B cell (primary cell): ENCODE measurements at regions of chr1 and their contacts with region 1.

Region 1: GRCh38 chr1:108512239-108512981 is 47.5 kb upstream of the EEIG2 start:
- DNase-seq: peak; percentile 68
- ATAC-seq: peak; percentile 65
- H3K4me3 ChIP-seq: no peak overlapping the region
- H3K4me3 Mint-ChIP-seq: no peak overlapping the region
- H3K27ac ChIP-seq: no peak overlapping the region
- H3K27ac Mint-ChIP-seq: no peak overlapping the region
- H3K4me1 ChIP-seq: no peaks in the 10 kb centered on the region
- H3K4me1 Mint-ChIP-seq: no peaks in the 10 kb centered on the region
- H3K27me3 ChIP-seq: peaks cover 0 to 6% (median 0%) of the 10 kb centered on the region in 4 experiments
- H3K27me3 Mint-ChIP-seq: peaks cover 8% of the 10 kb centered on the region
- CTCF ChIP-seq: peak; percentile 97

Region 2: GRCh38 chr1:108570128-108570527 is 57.7 kb after region 1 on chr1:
- CTCF ChIA-PET with region 1: interaction called, 34 read pairs
- POLR2A ChIA-PET with region 1: no interaction called
- intact Hi-C with region 1: no loop called
- DNase-seq: peak; percentile 43
- ATAC-seq: peak; percentile 97
- H3K4me3 ChIP-seq: no peak overlapping the region
- H3K4me3 Mint-ChIP-seq: no peak overlapping the region
- H3K27ac ChIP-seq: no peak overlapping the region
- H3K27ac Mint-ChIP-seq: no peak overlapping the region
- H3K4me1 ChIP-seq: peaks cover 7 to 8% of the 10 kb centered on the region in 2 donors
- H3K4me1 Mint-ChIP-seq: peaks cover 5% of the 10 kb centered on the region
- H3K27me3 ChIP-seq: no peaks in the 10 kb centered on the region
- H3K27me3 Mint-ChIP-seq: no peaks in the 10 kb centered on the region
- CTCF ChIP-seq: peak; percentile 56

Region 3: DNA sequence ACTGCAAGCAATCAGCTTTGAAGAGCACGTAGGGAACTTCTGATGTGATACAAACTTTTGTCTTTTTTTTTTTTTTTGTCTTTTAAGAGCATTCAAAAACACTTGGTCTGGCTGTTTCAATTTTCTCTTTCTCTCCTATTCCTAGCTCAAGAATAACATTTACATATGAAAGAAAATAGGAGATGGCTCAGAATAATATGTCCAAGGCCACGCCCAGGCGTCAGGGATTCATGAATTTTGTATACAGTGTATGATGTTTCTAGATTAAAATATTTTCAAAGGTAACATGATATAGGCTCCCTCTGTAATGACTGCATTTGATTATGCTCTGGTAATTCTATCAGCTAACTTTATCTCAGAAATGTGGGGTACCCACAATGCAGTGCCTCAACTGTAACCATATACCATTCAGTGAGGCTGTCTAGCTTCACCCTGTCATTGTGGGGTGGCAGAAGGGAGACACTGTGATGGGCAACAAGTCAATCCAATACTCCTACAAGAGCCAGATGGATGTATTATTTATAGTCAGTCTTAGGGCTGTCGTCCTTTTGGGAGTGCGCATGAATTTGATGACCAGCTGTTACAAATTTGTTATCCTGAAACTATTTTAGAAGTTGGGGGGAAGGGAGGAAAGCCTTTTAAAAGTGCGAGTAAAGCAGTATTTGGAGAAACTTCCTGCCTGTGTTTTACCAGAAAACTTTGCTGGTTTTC is 346.0 kb after region 1 on chr1:
- CTCF ChIA-PET with region 1: no interaction called
- POLR2A ChIA-PET with region 1: no interaction called
- intact Hi-C with region 1: no loop called
- DNase-seq: no peak
- ATAC-seq: no peak
- H3K4me3 ChIP-seq: no peak overlapping the region
- H3K4me3 Mint-ChIP-seq: no peak overlapping the region
- H3K27ac ChIP-seq: no peak overlapping the region
- H3K27ac Mint-ChIP-seq: no peak overlapping the region
- H3K4me1 ChIP-seq: peaks cover 14 to 16% of the 10 kb centered on the region in 2 donors
- H3K4me1 Mint-ChIP-seq: peaks cover 12% of the 10 kb centered on the region
- H3K27me3 ChIP-seq: peaks cover 0 to 6% (median 2%) of the 10 kb centered on the region in 4 experiments
- H3K27me3 Mint-ChIP-seq: peaks cover 17% of the 10 kb centered on the region
- CTCF ChIP-seq: no peak

Region 4: DNA sequence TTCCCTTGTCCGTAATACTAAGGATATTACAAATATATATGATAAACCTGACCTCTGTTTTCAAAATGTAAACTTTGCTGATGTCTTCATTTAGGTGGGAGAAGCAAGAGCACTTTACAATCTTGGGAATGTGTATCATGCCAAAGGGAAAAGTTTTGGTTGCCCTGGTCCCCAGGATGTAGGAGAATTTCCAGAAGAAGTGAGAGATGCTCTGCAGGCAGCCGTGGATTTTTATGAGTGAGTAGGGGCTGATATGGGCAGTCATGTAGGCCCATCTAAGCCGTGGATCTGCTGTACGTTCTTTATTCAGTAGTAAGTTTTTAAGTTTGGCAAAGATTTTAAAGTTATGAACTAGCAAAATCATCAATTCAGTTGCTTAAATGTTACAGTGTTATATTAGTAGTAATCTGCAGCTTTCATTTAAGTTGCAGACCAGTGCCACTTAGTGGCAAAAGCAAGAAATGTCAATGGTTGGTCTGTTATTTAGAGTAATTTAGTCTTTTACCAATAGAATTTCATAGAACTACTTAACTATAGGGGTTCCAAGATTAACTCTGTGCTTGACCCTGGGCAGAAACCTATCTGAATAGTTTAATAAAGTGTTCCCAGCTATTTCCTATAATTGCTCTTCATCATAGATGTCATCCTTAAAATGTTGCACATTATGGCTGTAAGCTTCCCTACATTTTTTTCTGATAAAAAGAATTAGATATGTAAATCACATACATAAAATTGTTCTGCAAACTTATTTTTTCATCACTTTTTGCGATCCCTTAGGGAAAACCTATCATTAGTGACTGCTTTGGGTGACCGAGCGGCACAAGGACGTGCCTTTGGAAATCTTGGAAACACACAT is 385.7 kb after region 1 on chr1:
- CTCF ChIA-PET with region 1: interaction called, 15 read pairs
- POLR2A ChIA-PET with region 1: no interaction called
- intact Hi-C with region 1: no loop called
- DNase-seq: peak; percentile 66
- ATAC-seq: peak; percentile 62
- H3K4me3 ChIP-seq: no peak overlapping the region
- H3K4me3 Mint-ChIP-seq: no peak overlapping the region
- H3K27ac ChIP-seq: no peak overlapping the region
- H3K27ac Mint-ChIP-seq: no peak overlapping the region
- H3K4me1 ChIP-seq: no peaks in the 10 kb centered on the region
- H3K4me1 Mint-ChIP-seq: no peaks in the 10 kb centered on the region
- H3K27me3 ChIP-seq: no peaks in the 10 kb centered on the region
- H3K27me3 Mint-ChIP-seq: no peaks in the 10 kb centered on the region
- CTCF ChIP-seq: peak; percentile 77